Colonic mucosa (tissue), 4 donors: ENCODE measurements at regions of chr13 and their contacts with region 1.

Region 1: GRCh38 chr13:25574437-25575411 is 202.9 kb downstream of the ATP8A2 start:
- DNase-seq: peak; percentile 84
- H3K4me3 ChIP-seq: no peak overlapping the region
- H3K27ac ChIP-seq: no peak overlapping the region
- H3K4me1 ChIP-seq: no peaks in the 10 kb centered on the region
- H3K27me3 ChIP-seq: no peaks in the 10 kb centered on the region
- CTCF ChIP-seq: peak; percentile 61

Region 2: DNA sequence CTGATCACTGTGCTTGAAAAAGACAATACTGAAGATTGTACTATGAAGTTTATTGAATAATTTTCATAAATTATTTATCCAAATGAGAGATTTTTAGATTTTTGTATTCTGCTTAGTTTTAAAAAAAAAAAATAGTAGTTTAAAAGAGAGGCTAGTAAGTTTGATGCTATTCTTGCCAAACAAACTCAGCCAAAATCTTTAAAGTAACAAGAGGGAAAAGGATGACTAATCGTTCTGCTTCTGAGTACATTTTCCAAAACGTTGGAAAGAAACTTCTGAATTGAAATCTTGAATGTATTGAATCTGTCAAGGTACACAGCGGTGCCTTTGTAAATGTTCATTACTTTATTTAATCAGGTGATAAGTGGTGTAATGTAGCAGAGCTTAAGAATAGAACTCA is 238.9 kb before region 1 on chr13:
- intact Hi-C with region 1: no loop called
- DNase-seq: no peak
- H3K4me3 ChIP-seq: no peak overlapping the region
- H3K27ac ChIP-seq: no peak overlapping the region
- H3K4me1 ChIP-seq: no peaks in the 10 kb centered on the region
- H3K27me3 ChIP-seq: no peaks in the 10 kb centered on the region
- CTCF ChIP-seq: no peak

Region 3: GRCh38 chr13:26062844-26063444 is 488.2 kb after region 1 on chr13:
- intact Hi-C with region 1: loop called (anchors 2 kb)
- DNase-seq: peak; percentile 26
- H3K4me3 ChIP-seq: no peak overlapping the region
- H3K27ac ChIP-seq: no peak overlapping the region
- H3K4me1 ChIP-seq: no peaks in the 10 kb centered on the region
- H3K27me3 ChIP-seq: no peaks in the 10 kb centered on the region
- CTCF ChIP-seq: peak; percentile 57

Region 4: GRCh38 chr13:26071691-26072090 is 497.0 kb after region 1 on chr13:
- intact Hi-C with region 1: loop called (anchors 2 kb)
- DNase-seq: no peak
- H3K4me3 ChIP-seq: no peak overlapping the region
- H3K27ac ChIP-seq: no peak overlapping the region
- H3K4me1 ChIP-seq: no peaks in the 10 kb centered on the region
- H3K27me3 ChIP-seq: no peaks in the 10 kb centered on the region
- CTCF ChIP-seq: no peak